IMR-90 (cell line): ENCODE measurements at regions of chr2 and their contacts with region 1.

Region 1: GRCh38 chr2:55073000-55073983 is 23.0 kb upstream of the RTN4 start:
- DNase-seq: no peak
- ATAC-seq: no peak
- H3K4me3 ChIP-seq: no peak overlapping the region
- H3K27ac ChIP-seq: no peak overlapping the region
- H3K4me1 ChIP-seq: no peaks in the 10 kb centered on the region
- H3K27me3 ChIP-seq: no peaks in the 10 kb centered on the region
- CTCF ChIP-seq: no peak
- POLR2A ChIP-seq: no peak
- RAD21 ChIP-seq: no peak

Region 2: GRCh38 chr2:55093381-55093780 is 20.1 kb after region 1 on chr2:
- CTCF ChIA-PET with region 1: interaction called, 4 read pairs
- POLR2A ChIA-PET with region 1: interaction called, 13 read pairs
- dilution Hi-C with region 1: no loop called
- in situ Hi-C with region 1: no loop called
- intact Hi-C with region 1: no loop called
- DNase-seq: peak; percentile 93
- ATAC-seq: peak; percentile 64
- H3K4me3 ChIP-seq: no peak overlapping the region
- H3K27ac ChIP-seq: peak overlapping the region; percentile 21; the same call in 1 of the 2 replicates
- H3K4me1 ChIP-seq: peaks cover 32% of the 10 kb centered on the region
- H3K27me3 ChIP-seq: no peaks in the 10 kb centered on the region
- CTCF ChIP-seq: no peak
- POLR2A ChIP-seq: no peak
- RAD21 ChIP-seq: no peak